Activated T-helper 2 cell treated with anti-CD3 and anti-CD28 coated beads, Interferon-gamma antibody, Interleukin-2, Interleukin-4, amounts not matched to agents 10 μg/mL and 5 μg/mL and 100 μg/mL, durations not matched to agents 14 hours and 24 hours and 36 hours (primary cell): ENCODE measurements at regions of chr21 and their contacts with region 1.

Region 1: DNA sequence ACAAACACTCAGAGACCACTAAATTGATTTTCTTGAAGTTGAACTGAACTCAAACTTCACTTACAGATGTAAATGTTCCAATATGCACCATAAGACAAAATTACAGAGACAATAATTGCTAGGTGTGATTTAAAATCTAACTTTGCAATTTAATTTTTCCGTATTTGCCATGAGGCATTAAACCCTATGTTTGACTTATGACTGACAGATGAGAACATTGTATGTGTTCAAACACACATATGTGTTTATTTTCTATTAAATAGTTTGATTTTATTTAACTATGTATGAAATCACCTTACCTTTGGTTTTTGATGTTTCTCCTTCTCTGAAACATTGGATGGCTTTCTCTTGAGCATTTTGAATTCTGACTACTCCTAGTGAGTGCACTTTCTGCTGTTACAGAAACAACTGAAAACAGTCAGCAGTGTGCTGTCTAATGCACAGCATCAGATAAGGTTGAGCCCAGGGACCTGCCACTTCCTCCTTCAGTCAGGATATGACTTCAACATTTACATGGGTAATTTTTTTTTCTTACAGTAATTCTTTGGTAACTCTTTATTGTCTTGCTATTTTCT is at the start of gene SAMSN1:
- DNase-seq: peak; percentile 76
- H3K4me3 Mint-ChIP-seq: peak within 1 kb of the TSS; percentile 93
- H3K27ac Mint-ChIP-seq: peak within 1 kb of the TSS; percentile 78
- H3K4me1 Mint-ChIP-seq: peaks cover 56% of the 10 kb centered on the region
- H3K27me3 Mint-ChIP-seq: no peaks in the 10 kb centered on the region
- total RNA-seq, gene SAMSN1: 73.0 and 79.0 TPM in 2 replicates

Region 2: DNA sequence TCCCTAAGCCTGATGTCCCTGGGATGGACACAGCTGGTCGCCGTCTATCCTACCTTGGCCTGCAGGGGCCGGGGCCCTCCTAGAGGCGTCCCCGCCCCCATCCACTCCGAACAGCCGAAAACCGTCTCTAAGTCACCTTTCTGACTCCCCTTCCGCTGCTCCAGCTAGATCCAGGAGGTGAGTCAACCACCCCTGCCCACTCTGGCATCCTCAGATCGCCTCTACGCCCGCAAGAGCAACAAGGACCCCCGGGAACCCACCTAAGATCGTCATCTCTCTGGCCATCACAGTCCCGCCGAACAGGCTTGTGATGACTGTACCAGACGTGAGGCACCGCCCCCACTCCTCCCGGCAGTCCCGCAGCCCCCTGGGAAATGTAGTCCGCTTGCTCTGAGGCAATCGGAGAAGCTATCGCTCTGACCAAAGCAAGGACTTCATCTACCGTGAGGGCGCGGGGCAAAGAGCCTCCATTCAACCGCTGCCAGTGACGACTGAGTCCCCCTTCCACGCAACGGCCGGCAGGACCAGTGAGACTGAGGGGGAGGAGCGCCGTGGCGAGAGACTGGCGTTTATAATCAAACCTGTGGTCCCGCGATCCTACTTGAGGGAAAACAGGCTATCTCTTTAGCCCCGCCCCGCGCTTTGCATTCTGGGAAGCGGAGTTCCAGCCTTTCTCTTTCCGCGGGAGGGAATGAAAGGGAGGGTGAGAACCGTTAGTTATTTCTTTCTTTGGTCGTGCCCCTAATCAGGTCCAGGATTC is 163.0 kb before region 1 on chr21 and contains the start of gene HSPA13:
- intact Hi-C with region 1: loop called (anchors 5 kb)
- DNase-seq: peak; percentile 99
- H3K4me3 Mint-ChIP-seq: peak within 1 kb of the TSS; percentile 98
- H3K27ac Mint-ChIP-seq: peak within 1 kb of the TSS; percentile 98
- H3K4me1 Mint-ChIP-seq: peaks cover 34% of the 10 kb centered on the region
- H3K27me3 Mint-ChIP-seq: peaks cover 3% of the 10 kb centered on the region
- total RNA-seq, gene HSPA13: 40.6 and 47.6 TPM in 2 replicates

Region 3: GRCh38 chr21:14523234-14523633 is 22.8 kb before region 1 on chr21:
- intact Hi-C with region 1: loop called (anchors 1 kb)
- DNase-seq: no peak
- H3K4me3 Mint-ChIP-seq: peak overlapping the region; percentile 71
- H3K27ac Mint-ChIP-seq: peak overlapping the region; percentile 91
- H3K4me1 Mint-ChIP-seq: peaks cover 52% of the 10 kb centered on the region
- H3K27me3 Mint-ChIP-seq: no peaks in the 10 kb centered on the region

Region 4: DNA sequence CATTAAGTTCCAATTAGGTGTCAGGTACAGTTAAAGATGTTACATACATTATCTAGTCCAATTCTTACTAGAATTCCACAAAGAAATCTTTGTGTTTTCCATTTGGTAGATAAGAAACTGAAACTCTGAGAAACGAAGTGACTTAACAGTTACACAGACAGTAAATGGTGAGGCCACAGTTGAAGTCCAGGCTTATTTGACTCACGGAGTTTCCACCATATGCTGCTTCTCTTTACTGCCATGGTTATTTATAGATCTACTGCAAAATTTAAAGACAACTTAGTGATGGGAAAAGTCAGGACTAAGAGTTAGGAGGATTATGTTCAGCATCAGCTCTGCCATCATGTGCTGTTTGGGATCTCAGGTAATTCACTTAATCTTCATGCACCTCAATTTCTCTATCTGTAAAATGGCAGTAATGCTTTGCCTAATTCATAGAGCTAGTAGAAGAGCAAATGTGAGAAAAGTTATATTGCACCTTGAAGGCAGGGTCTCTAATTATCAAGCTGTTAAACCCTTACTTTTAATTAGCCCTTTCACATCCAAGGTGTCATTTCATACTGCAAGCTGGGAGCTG is 26.3 kb after region 1 on chr21:
- intact Hi-C with region 1: loop called (anchors 1 kb)
- DNase-seq: no peak
- H3K4me3 Mint-ChIP-seq: no peak overlapping the region
- H3K27ac Mint-ChIP-seq: peak overlapping the region; percentile 90
- H3K4me1 Mint-ChIP-seq: peaks cover 53% of the 10 kb centered on the region
- H3K27me3 Mint-ChIP-seq: no peaks in the 10 kb centered on the region

Region 5: DNA sequence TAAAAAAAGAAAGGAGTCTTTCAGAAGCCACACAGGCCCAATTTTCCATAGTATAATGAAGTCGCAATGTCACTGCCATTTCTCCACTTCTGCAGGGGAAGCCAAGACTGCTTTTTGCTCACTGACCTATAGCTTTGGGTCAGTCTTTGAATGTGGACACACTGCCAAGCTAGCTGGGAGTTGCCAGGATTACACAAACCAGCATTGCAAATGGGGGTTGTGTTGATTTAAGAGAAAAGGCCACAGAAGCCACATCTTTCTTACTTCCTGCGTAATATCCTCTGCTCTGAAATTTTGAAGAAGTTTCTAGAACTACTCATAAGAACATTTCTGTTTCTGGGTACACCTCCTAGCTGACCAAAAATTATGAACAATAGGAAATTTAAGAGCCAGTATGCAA is 45.9 kb after region 1 on chr21:
- intact Hi-C with region 1: loop called (anchors 2 kb)
- DNase-seq: no peak
- H3K4me3 Mint-ChIP-seq: no peak overlapping the region
- H3K27ac Mint-ChIP-seq: peak overlapping the region; percentile 86
- H3K4me1 Mint-ChIP-seq: peaks cover 38% of the 10 kb centered on the region
- H3K27me3 Mint-ChIP-seq: no peaks in the 10 kb centered on the region

Region 6: GRCh38 chr21:14630556-14631069 is 84.6 kb after region 1 on chr21:
- intact Hi-C with region 1: loop called (anchors 2 kb)
- DNase-seq: no peak
- H3K4me3 Mint-ChIP-seq: no peak overlapping the region
- H3K27ac Mint-ChIP-seq: peak overlapping the region; percentile 62
- H3K4me1 Mint-ChIP-seq: peaks cover 24% of the 10 kb centered on the region
- H3K27me3 Mint-ChIP-seq: no peaks in the 10 kb centered on the region

Region 7: GRCh38 chr21:14737922-14738321 is 191.9 kb after region 1 on chr21:
- intact Hi-C with region 1: loop called (anchors 2 kb)
- DNase-seq: peak; percentile 25
- H3K4me3 Mint-ChIP-seq: no peak overlapping the region
- H3K27ac Mint-ChIP-seq: no peak overlapping the region
- H3K4me1 Mint-ChIP-seq: peaks cover 41% of the 10 kb centered on the region
- H3K27me3 Mint-ChIP-seq: no peaks in the 10 kb centered on the region